ENCODE measurements at regions of chr7 and their contacts with region 1.

Region 1: GRCh38 chr7:100478966-100479665 is at the start of gene TSC22D4:
- DNase-seq: peak; percentile 91
- CTCF ChIP-seq: no peak

Region 2: GRCh38 chr7:100418930-100419659 is 60.0 kb before region 1 on chr7:
- CTCF ChIA-PET with region 1: no interaction called
- POLR2A ChIA-PET with region 1: no interaction called
- DNase-seq: no peak
- CTCF ChIP-seq: no peak

Region 3: GRCh38 chr7:100493476-100494264 is 14.6 kb after region 1 on chr7:
- CTCF ChIA-PET with region 1: interaction called, 20 read pairs
- POLR2A ChIA-PET with region 1: interaction called, 3 read pairs
- DNase-seq: peak; percentile 65
- CTCF ChIP-seq: peak; percentile 51

Region 4: DNA sequence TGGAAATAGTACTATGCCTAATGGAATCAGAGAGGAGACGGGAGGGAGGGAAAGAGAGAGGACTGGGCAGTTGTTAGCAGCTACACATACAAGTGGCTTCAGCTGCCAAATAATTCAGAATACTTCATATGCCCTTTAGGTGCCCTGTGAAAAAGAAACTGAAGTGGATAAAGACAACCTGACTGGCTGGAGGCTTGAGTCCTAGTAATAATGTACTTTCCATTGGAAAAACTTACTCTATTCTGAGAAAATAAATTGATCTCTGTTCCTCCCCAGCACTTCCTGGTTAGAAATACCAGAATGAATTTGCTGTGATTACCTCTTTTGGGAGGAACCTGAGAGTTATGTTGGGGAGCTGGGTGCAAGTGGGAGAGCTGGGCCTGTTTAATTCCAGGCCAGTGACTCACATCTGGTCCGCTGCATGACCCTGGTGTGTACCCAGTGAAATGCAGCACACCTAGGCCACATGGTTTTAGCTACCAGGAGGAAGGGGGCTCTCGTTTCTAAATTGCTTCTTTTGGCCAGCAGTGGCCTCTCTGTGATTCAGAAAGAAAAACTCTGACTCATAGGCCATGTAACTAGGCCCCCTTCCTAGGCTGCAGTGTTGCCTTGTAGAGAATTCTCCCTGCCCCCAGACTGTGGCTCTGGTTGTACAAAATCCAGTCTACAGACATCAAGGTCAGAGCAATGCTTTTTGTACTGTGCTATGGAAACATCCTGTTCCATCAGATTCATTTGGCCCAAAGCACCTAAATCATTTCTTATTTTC is 66.4 kb after region 1 on chr7:
- CTCF ChIA-PET with region 1: interaction called, 7 read pairs
- POLR2A ChIA-PET with region 1: interaction called, 10 read pairs
- DNase-seq: peak; percentile 61
- CTCF ChIP-seq: no peak

Region 5: GRCh38 chr7:101058355-101058754 is 579.2 kb after region 1 on chr7:
- CTCF ChIA-PET with region 1: no interaction called
- POLR2A ChIA-PET with region 1: no interaction called
- DNase-seq: peak; percentile 36
- CTCF ChIP-seq: no peak

Measured in GM10248 (cell line).